HepG2 (cell line): ENCODE measurements at regions of chr5 and their contacts with region 1.

Region 1: GRCh38 chr5:44675296-44675695 is 133.5 kb upstream of the MRPS30 start:
- DNase-seq: no peak
- ATAC-seq: no peak
- H3K4me3 ChIP-seq: no peak overlapping the region
- H3K27ac ChIP-seq: no peak overlapping the region
- H3K4me1 ChIP-seq: no peaks in the 10 kb centered on the region
- H3K27me3 ChIP-seq: no peaks in the 10 kb centered on the region
- CTCF ChIP-seq: no peak
- EP300 ChIP-seq: no peak
- POLR2A ChIP-seq: no peak
- RAD21 ChIP-seq: no peak

Region 2: GRCh38 chr5:44312374-44312773 is 362.9 kb before region 1 on chr5:
- CTCF ChIA-PET with region 1: no interaction called
- POLR2A ChIA-PET with region 1: no interaction called
- in situ Hi-C with region 1: no loop called
- intact Hi-C with region 1: no loop called
- DNase-seq: no peak
- ATAC-seq: no peak
- H3K4me3 ChIP-seq: no peak overlapping the region
- H3K27ac ChIP-seq: no peak overlapping the region
- H3K4me1 ChIP-seq: no peaks in the 10 kb centered on the region
- H3K27me3 ChIP-seq: no peaks in the 10 kb centered on the region; a peak in 1 of 5 replicates
- CTCF ChIP-seq: no peak
- EP300 ChIP-seq: no peak
- POLR2A ChIP-seq: no peak
- RAD21 ChIP-seq: no peak

Region 3: GRCh38 chr5:44663991-44664710 is 11.1 kb before region 1 on chr5:
- CTCF ChIA-PET with region 1: no interaction called
- POLR2A ChIA-PET with region 1: no interaction called
- in situ Hi-C with region 1: no loop called
- intact Hi-C with region 1: loop called (anchors 1 kb)
- DNase-seq: no peak
- ATAC-seq: no peak
- H3K4me3 ChIP-seq: no peak overlapping the region
- H3K27ac ChIP-seq: no peak overlapping the region
- H3K4me1 ChIP-seq: no peaks in the 10 kb centered on the region
- H3K27me3 ChIP-seq: no peaks in the 10 kb centered on the region
- CTCF ChIP-seq: no peak
- EP300 ChIP-seq: no peak
- POLR2A ChIP-seq: no peak
- RAD21 ChIP-seq: no peak